ENCODE measurements at regions of chr5 and their contacts with region 1.

Region 1: GRCh38 chr5:171913987-171914273 is 92.5 kb downstream of the FBXW11 start:
- DNase-seq: no peak
- ATAC-seq: no peak
- H3K4me3 ChIP-seq: no peak overlapping the region
- H3K27ac ChIP-seq: peak overlapping the region in 2 of 4 donors; percentile 18 to 45
- H3K4me1 ChIP-seq: peaks cover 43% of the 10 kb centered on the region
- H3K27me3 ChIP-seq: no peaks in the 10 kb centered on the region
- CTCF ChIP-seq: no peak
- POLR2A ChIP-seq: no peak

Region 2: GRCh38 chr5:171984748-171985419 is 71.0 kb after region 1 on chr5:
- intact Hi-C with region 1: loop called (anchors 10 kb)
- DNase-seq: no peak
- ATAC-seq: no peak
- H3K4me3 ChIP-seq: no peak overlapping the region
- H3K27ac ChIP-seq: no peak overlapping the region
- H3K4me1 ChIP-seq: peaks cover 57% of the 10 kb centered on the region
- H3K27me3 ChIP-seq: no peaks in the 10 kb centered on the region
- CTCF ChIP-seq: no peak
- POLR2A ChIP-seq: no peak

Region 3: DNA sequence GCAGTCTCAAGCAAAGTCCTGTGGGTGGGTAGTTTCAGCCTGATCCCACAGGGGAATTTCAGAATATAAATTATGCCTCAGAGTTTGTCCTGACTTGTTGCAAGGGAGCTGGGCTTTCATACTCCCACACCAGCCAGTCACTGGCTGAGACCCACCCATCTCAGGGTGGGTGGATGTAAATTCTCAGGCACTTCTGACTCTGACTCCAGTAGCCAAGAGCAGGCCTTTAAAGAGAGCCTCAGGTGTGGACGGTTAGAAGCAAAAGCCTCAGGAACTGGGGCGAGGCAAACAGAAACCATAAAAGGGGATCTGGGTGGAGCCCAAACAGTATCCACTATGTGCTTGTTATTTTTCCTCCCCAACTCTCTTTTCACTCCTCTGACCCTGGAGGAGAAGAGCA is 121.1 kb after region 1 on chr5:
- intact Hi-C with region 1: loop called (anchors 5 kb)
- DNase-seq: no peak
- ATAC-seq: no peak
- H3K4me3 ChIP-seq: no peak overlapping the region
- H3K27ac ChIP-seq: no peak overlapping the region
- H3K4me1 ChIP-seq: peaks cover 2% of the 10 kb centered on the region
- H3K27me3 ChIP-seq: no peaks in the 10 kb centered on the region
- CTCF ChIP-seq: no peak
- POLR2A ChIP-seq: no peak

Measured in body of pancreas (tissue), 4 donors.